ENCODE measurements at regions of chr1 and their contacts with region 1.

Region 1: DNA sequence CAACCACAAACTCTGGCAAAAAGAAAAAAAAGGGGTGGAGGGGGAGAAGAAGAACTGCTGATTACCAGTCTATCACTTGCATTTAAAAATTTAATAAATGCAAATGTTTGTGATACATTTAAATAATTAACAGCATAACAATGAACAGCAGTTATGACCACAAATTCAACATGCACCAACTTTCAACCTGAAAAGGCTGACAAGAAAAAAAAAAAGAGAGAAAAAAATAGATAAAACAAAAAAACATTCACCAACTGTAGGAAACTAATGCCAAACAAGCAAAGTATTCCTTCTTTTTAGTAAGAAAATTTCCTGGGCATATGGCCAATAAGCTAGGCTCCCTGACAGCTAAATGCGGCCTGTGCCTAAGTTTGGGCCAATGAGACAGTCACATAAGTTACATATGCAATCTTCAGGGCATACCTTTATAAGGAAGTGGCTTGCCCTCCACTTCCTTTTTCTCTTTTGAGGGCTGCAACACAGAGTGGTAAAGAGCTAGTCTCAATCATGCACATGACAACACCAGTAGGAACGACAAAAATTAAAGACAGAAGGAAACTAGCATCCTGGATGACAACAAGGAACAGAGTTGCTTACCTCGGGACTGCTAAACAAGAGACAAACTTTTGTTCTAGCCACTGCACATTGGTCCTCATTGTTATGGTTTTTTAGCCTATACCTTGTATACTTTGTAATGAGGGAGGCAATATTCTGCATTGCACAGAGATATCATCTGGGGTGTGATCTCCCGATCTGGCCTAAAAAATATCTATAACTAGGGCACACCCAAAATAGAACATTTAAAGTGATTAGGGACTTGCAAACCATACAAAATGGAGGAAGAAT is 24.2 kb upstream of the PHTF1 start:
- DNase-seq: peak; percentile 88
- H3K4me3 Mint-ChIP-seq: peak overlapping the region; percentile 78
- H3K27ac Mint-ChIP-seq: peak overlapping the region; percentile 95
- H3K4me1 Mint-ChIP-seq: peaks cover 50% of the 10 kb centered on the region
- H3K27me3 Mint-ChIP-seq: no peaks in the 10 kb centered on the region

Region 2: DNA sequence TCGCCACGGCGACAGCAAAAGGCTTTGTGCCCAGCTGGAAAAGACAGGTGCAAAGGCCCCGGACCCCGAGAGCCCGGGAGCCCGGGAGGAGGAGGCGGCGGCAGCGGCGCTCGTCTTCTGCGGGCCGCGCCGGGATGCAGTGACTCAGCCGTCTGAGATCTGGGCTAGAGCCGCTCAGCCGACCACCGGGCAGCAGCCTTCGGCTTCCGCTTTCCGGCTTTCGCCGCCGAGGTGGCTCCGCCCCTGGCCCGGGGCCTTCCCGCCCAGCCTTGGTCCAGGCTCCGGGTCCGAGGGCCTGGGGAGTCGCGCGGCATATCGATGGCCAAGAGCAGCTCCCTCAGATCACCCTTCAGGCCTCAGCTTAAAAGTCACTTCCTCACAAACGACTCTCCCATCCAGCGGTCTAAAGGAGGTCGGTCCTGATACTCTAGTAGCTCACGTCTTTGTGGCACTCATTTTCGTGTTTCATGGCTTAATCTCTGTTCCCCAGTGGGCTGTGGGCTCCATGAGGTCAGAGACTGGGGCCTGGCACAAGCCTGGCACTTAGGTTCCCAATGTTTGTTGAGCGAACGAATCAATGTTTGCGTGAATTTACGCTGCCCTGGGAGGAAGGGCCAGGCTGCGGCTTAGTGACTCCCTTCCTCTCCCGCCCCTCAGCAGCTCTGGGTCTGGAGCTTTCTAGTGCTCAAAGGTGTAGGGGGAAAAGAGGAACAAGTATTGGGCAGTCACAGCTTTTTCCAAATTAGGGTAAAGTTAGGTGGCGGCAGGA is 24.0 kb before region 1 on chr1 and contains the start of gene PHTF1:
- intact Hi-C with region 1: loop called (anchors 2 kb)
- DNase-seq: peak; percentile 89
- H3K4me3 Mint-ChIP-seq: peak within 1 kb of the TSS; percentile 97
- H3K27ac Mint-ChIP-seq: peak within 1 kb of the TSS; percentile 97
- H3K4me1 Mint-ChIP-seq: peaks cover 30% of the 10 kb centered on the region
- H3K27me3 Mint-ChIP-seq: no peaks in the 10 kb centered on the region
- total RNA-seq, gene PHTF1: 15.6 and 19.2 TPM in 2 replicates

Region 3: GRCh38 chr1:113802367-113803007 is 19.0 kb after region 1 on chr1:
- intact Hi-C with region 1: loop called (anchors 1 kb)
- DNase-seq: no peak
- H3K4me3 Mint-ChIP-seq: no peak overlapping the region
- H3K27ac Mint-ChIP-seq: peak overlapping the region; percentile 15
- H3K4me1 Mint-ChIP-seq: peaks cover 50% of the 10 kb centered on the region
- H3K27me3 Mint-ChIP-seq: no peaks in the 10 kb centered on the region